ENCODE measurements at regions of chr3 and their contacts with region 1.

Region 1: DNA sequence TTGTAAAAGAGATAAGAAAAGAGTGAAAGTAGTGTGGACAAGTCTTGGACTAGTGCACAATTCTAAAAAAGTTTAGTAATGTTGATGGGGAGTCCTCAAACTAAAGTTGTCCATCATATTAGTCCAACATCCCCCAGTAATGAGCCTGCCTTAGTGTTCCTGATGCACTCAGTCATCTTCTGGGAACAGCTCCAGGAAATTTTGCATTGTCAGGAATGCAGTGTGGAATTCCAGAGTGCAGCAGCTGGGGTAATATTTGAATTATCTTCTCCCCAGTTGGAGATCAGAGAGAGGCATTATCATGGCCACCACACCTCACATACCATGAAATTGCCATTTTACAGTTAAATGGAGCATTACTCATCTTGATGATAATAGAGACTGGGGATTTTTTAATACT is 528.8 kb upstream of the NAALADL2 start:
- ATAC-seq: peak in 3 of 8 experiments; percentile 72 to 82 (median 74)
- H3K4me3 ChIP-seq: no peak overlapping the region
- H3K27ac ChIP-seq: no peak overlapping the region
- H3K4me1 ChIP-seq: peaks cover 0 to 11% of the 10 kb centered on the region in 2 donors

Region 2: GRCh38 chr3:173584093-173584837 is 746.0 kb before region 1 on chr3:
- in situ Hi-C with region 1: loop called in 1 of 9 experiments (anchors 25 kb)
- ATAC-seq: peak; percentile 17 to 44 (median 34)
- H3K4me3 ChIP-seq: peak overlapping the region; percentile 43 to 56 (median 46)
- H3K27ac ChIP-seq: peak overlapping the region in 1 of 2 donors; percentile 69
- H3K4me1 ChIP-seq: peaks cover 15 to 33% of the 10 kb centered on the region in 2 donors

Region 3: DNA sequence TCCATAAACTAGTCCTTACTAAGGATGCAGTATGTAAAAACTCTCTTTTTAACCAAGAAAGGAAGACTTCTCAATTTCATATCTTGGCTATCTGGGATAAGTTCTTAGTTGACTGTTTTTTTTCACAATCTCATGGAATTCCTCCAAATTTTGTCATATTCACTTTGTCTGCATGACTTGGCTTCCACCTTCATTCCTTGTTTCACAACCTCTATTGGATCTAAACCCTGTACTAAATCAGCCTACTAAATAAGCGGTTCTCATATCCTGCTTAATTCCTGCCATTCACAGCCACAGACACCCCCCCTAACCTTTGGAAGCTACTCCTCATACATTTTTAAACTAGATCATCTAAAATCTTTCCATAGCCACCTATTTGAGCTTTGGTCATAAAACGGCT is 158.2 kb after region 1 on chr3:
- in situ Hi-C with region 1: no loop called
- ATAC-seq: no peak
- H3K4me3 ChIP-seq: no peak overlapping the region
- H3K27ac ChIP-seq: no peak overlapping the region
- H3K4me1 ChIP-seq: no peaks in the 10 kb centered on the region

Region 4: GRCh38 chr3:174498638-174499037 is 168.3 kb after region 1 on chr3:
- in situ Hi-C with region 1: no loop called
- ATAC-seq: peak in 3 of 8 experiments; percentile 67 to 90 (median 78)
- H3K4me3 ChIP-seq: no peak overlapping the region
- H3K27ac ChIP-seq: no peak overlapping the region
- H3K4me1 ChIP-seq: peaks cover 0 to 5% of the 10 kb centered on the region in 2 donors